Breast epithelium (tissue), 4 donors: ENCODE measurements at regions of chr16 and their contacts with region 1.

Region 1: DNA sequence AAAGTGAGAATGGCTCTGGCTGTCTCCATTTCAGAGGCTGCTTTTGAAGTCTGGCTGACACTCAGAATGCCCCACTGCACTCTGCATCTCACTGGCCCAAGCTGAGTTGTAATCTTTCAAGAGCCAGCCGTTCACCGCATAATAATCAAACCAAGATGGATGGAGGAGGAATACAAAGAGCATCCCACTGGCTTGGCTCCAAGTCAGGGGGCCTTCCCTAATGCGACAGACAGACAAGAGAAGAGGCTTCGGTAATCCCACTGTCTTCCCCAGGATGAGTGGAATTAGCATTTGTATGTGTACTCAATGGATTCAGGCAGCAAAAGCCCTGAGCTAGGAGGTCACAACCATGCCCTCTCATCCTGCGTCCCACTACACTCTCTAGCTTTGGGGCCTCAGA is 68.0 kb downstream of the CBLN1 start:
- DNase-seq: no peak
- H3K4me3 ChIP-seq: no peak overlapping the region
- H3K27ac ChIP-seq: no peak overlapping the region
- H3K4me1 ChIP-seq: no peaks in the 10 kb centered on the region
- H3K27me3 ChIP-seq: no peaks in the 10 kb centered on the region
- CTCF ChIP-seq: no peak
- POLR2A ChIP-seq: no peak

Region 2: DNA sequence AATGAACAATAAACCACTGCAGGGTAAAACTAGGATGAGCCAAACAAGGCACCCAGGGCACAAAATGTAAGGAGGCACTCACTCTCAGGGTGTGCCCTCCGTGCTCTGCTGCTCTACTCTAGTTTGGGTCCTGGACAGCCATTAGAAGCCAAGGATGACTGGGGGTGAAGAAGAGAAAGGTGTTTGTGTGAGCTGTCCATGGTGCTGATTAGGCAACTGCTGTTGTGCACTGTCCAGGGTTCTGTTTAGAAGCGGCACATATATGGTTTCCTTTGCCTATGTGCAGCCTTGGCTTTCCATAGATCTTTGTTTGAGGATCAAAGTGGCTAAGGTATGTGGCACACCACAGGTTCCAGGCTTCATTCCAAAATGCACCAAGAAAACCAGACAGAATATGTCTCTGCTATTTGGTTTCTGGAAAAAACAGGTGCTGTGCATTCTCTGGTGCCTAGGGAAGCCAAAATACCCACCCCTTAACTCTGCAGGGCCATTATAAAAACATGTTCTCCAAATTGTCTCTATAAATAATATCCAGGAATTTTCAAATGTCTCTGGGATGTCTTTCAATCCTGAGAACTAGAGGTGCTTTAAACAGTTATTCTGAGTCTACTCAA is 55.5 kb before region 1 on chr16:
- intact Hi-C with region 1: no loop called
- DNase-seq: no peak
- H3K4me3 ChIP-seq: no peak overlapping the region
- H3K27ac ChIP-seq: no peak overlapping the region
- H3K4me1 ChIP-seq: no peaks in the 10 kb centered on the region
- H3K27me3 ChIP-seq: no peaks in the 10 kb centered on the region
- CTCF ChIP-seq: no peak
- POLR2A ChIP-seq: no peak

Region 3: GRCh38 chr16:49330562-49331201 is 117.1 kb after region 1 on chr16:
- intact Hi-C with region 1: no loop called
- DNase-seq: no peak
- H3K4me3 ChIP-seq: no peak overlapping the region
- H3K27ac ChIP-seq: no peak overlapping the region
- H3K4me1 ChIP-seq: no peaks in the 10 kb centered on the region
- H3K27me3 ChIP-seq: no peaks in the 10 kb centered on the region
- CTCF ChIP-seq: no peak
- POLR2A ChIP-seq: no peak

Region 4: GRCh38 chr16:50326949-50327402 is 1113.4 kb after region 1 on chr16:
- intact Hi-C with region 1: no loop called
- DNase-seq: no peak
- H3K4me3 ChIP-seq: no peak overlapping the region
- H3K27ac ChIP-seq: no peak overlapping the region
- H3K4me1 ChIP-seq: no peaks in the 10 kb centered on the region
- H3K27me3 ChIP-seq: no peaks in the 10 kb centered on the region
- CTCF ChIP-seq: peak in 1 of 3 donors; percentile 24
- POLR2A ChIP-seq: no peak

Region 5: DNA sequence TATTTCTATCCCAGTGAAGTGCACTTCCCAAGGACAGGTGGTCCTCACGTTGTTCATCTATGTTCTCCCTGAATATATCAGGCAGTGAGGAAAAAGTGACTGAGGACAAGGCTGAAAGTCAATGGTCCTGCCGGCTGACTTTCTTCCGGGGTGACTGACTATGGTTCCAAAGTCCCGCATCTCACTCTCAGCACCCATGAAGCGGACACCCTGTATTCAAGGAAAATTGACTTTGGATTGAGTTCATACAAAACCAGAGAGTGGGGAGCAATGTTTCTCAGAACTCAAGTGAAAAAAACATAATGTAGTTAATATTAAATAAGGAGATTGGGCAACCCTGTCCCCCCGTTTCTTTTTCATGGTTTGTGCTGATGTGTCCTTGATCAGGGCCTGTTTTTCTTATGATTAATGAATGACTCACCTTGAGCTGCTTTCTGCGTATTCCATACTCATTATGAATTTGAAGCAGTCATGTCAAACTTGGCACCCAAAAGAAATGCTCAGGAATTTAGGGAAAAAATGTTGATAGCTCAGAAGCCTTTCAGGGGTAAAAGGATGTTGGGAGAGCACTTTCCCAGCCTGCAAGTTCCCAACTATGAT is 1712.3 kb after region 1 on chr16:
- intact Hi-C with region 1: loop called (anchors 10 kb)
- DNase-seq: no peak
- H3K4me3 ChIP-seq: no peak overlapping the region
- H3K27ac ChIP-seq: no peak overlapping the region
- H3K4me1 ChIP-seq: no peaks in the 10 kb centered on the region
- H3K27me3 ChIP-seq: peaks cover 0 to 7% of the 10 kb centered on the region in 2 donors
- CTCF ChIP-seq: no peak
- POLR2A ChIP-seq: no peak